ENCODE measurements at regions of chr17 and their contacts with region 1.

Region 1: DNA sequence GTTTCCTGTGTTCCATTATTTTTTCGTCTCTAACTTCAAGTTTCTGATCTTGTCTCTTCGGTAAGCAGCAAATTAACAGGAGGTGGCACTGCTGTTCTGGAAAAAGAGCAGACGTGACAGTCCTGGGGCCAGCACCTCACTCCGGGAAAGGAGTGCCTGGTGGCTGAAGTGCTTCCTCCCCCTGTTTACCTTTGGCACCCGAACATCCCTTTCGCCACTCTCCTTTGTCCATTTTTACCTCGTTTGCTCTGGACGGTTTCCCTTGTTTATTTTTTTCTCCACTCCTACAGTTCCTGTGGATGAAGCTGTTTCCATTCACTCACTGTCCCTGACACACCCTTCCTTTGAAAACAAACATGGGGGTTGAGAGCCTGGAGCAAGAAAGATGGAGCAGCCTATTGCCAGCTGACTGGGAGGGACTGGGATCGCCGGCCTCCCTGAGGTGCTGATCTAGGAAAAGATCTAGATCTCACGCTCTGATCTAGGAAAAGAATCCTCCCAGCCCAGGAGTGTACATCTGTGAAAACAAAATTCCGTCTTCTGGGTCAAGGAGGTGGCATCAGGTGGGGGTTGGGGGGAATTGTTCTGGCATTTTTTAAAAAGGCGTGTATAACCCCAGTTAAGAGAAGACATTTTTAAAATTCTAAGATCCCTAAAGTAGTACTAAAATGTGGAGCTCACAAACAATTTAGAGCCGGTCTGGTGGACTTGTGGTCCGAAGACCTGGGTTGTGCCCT is 12.7 kb downstream of the SAP30BP start:
- DNase-seq: peak; percentile 41

Region 2: GRCh38 chr17:75749545-75750389 is 69.9 kb after region 1 on chr17:
- in situ Hi-C with region 1: loop called (anchors 10 kb)
- DNase-seq: peak; percentile 74